ENCODE measurements at regions of chr7 and their contacts with region 1.

Region 1: DNA sequence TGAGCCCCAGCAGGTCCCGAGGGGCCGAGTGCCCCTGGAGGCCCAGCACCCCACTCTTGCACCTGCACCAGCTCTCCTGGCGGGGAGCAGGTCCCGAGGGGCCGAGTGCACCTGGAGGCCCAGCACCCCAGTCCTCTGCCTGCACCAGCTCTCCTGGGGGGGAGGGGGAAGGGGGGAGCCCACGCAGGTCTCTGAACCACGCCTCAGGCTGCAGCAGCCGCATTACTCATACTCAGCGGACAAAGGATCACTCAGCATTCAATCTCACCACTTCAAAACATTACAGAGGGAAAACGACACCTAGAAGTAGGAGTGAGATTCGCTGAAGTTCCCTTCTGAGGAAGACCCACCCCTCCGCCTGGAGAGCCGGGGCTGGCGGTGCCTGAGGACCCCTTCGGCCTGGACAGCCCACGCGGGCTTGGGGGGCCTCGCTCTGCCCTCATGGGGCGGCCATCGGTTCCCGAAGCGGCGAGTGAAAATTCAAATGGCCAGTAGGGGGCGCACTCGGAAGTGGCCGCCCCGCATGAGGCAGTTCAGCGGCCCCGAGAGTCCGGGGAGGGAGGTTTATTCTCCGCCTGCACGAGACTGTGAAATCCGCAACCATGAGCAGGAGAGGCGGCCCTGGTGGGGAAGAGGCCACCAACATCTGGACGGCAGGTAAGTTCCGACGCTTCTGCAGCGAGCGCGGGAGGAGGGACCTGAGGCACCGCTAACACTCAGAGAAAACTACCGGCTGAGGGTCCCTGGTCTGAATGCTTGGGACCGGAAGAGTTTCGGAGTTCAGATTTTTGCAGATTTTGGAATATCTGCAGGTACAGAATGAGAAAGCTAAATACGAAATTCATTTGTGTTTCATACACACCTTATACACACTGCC is 1.1 kb upstream of the GPER1 start:
- DNase-seq: peak; percentile 73
- H3K4me3 ChIP-seq: peak overlapping the region; percentile 7 to 46 (median 36)
- H3K27ac ChIP-seq: peak overlapping the region; percentile 54
- H3K4me1 ChIP-seq: peaks cover 21% of the 10 kb centered on the region
- H3K27me3 ChIP-seq: no peaks in the 10 kb centered on the region
- CTCF ChIP-seq: peak; percentile 85 to 90
- POLR2A ChIP-seq: no peak

Region 2: DNA sequence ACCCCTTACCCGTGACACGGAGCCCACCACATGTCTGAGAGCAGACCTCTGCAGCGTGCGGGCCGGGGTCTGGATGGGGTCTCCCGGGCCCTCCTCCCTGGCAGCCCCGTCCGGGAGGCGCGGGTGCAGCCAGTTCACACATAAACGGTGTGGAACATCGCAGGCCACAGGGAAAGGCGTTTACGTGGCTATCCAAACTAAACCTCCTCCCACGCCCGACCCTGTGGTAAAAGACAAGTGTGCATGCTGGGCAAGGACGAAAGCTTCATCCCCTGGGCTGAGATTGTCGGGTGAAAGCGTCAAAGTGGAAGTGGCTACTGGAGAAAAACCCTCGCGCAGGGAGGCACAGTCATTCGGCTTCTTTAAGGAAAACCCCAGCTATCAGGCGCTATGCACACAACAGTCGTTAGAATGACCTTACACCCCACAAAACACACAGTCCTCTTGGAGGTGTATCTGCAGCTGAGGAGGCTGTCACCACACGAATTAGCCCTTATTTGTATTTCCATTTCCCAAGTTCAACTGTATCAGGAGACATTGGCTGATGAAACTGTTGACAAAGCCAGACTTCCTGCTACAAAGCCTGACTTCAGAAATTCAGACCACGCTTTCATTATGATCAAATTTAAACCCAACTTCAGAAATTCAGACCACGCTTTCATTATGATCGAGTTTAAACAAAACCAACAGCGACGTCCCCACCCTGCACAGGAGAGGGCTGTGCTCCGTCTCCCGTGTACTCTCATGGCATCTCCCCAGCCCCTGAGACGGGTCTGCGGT is 16.4 kb after region 1 on chr7:
- CTCF ChIA-PET with region 1: interaction called, 13 read pairs
- POLR2A ChIA-PET with region 1: no interaction called
- dilution Hi-C with region 1: no loop called
- intact Hi-C with region 1: no loop called
- DNase-seq: no peak
- H3K4me3 ChIP-seq: no peak overlapping the region
- H3K27ac ChIP-seq: no peak overlapping the region
- H3K4me1 ChIP-seq: peaks cover 19% of the 10 kb centered on the region
- H3K27me3 ChIP-seq: no peaks in the 10 kb centered on the region
- CTCF ChIP-seq: no peak
- POLR2A ChIP-seq: no peak

Region 3: DNA sequence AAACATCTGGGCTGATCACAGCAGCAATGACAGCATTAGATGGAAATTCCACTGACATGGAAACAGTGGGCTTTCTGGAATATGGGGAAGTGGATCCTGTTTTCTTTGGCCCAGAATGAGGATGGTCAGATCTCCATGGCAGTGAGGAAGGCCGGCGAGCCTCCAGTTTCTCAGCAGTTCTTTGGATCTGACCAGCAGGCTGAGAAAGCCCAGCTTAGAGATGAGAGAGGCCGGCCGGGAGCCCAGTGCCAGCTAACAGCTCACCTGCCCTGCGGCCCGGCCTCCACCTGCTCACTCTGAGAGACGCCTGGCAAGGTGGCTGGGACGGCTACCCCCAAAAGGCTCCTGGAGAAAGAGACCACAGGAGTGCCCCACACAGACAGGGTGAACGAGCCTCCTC is 25.3 kb after region 1 on chr7:
- CTCF ChIA-PET with region 1: interaction called, 11 read pairs
- POLR2A ChIA-PET with region 1: no interaction called
- dilution Hi-C with region 1: no loop called
- intact Hi-C with region 1: no loop called
- DNase-seq: peak; percentile 74
- H3K4me3 ChIP-seq: no peak overlapping the region
- H3K27ac ChIP-seq: no peak overlapping the region
- H3K4me1 ChIP-seq: peaks cover 7% of the 10 kb centered on the region
- H3K27me3 ChIP-seq: no peaks in the 10 kb centered on the region
- CTCF ChIP-seq: no peak
- POLR2A ChIP-seq: no peak

Region 4: DNA sequence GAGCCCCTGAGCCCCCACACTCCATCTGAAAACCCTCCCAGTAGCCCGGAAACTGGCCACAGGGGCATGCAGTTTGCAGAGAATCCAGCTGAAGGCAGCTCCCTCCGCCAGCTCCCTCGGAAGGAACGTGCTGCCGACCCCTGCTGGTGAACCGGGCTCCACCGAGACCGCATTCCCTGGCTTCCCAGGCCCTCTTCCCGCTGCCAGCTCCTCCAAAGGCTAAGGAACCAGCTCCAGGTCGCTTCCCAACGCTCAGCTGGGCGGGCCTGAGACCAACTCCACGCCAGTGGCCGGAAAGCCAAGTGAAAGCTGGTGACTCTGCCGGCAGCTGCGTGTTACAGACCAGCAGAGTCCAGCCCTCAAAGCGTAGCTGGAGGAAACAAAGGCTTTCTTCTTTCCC is 36.9 kb after region 1 on chr7:
- CTCF ChIA-PET with region 1: interaction called, 65 read pairs
- POLR2A ChIA-PET with region 1: no interaction called
- dilution Hi-C with region 1: no loop called
- intact Hi-C with region 1: loop called (anchors 2 kb)
- DNase-seq: peak; percentile 94
- H3K4me3 ChIP-seq: no peak overlapping the region
- H3K27ac ChIP-seq: peak overlapping the region; percentile 75
- H3K4me1 ChIP-seq: peaks cover 12% of the 10 kb centered on the region
- H3K27me3 ChIP-seq: no peaks in the 10 kb centered on the region
- CTCF ChIP-seq: peak; percentile 78 to 93
- POLR2A ChIP-seq: peak; percentile 38

Region 5: GRCh38 chr7:1137510-1138167 is 50.8 kb after region 1 on chr7:
- CTCF ChIA-PET with region 1: interaction called, 22 read pairs
- POLR2A ChIA-PET with region 1: interaction called, 3 read pairs
- dilution Hi-C with region 1: no loop called
- intact Hi-C with region 1: loop called (anchors 1 kb)
- DNase-seq: no peak
- H3K4me3 ChIP-seq: peak overlapping the region; percentile 72 to 97 (median 80)
- H3K27ac ChIP-seq: peak overlapping the region; percentile 33
- H3K4me1 ChIP-seq: peaks cover 10% of the 10 kb centered on the region
- H3K27me3 ChIP-seq: no peaks in the 10 kb centered on the region
- CTCF ChIP-seq: no peak
- POLR2A ChIP-seq: peak; percentile 64

Region 6: GRCh38 chr7:1159891-1160668 is 73.3 kb after region 1 on chr7 and contains the start of gene ZFAND2A:
- CTCF ChIA-PET with region 1: no interaction called
- POLR2A ChIA-PET with region 1: interaction called, 4 read pairs
- dilution Hi-C with region 1: no loop called
- intact Hi-C with region 1: loop called (anchors 5 kb)
- DNase-seq: peak; percentile 99
- H3K4me3 ChIP-seq: peak within 1 kb of the TSS; percentile 71 to 97 (median 77)
- H3K27ac ChIP-seq: peak within 1 kb of the TSS; percentile 79
- H3K4me1 ChIP-seq: peaks cover 30% of the 10 kb centered on the region
- H3K27me3 ChIP-seq: no peaks in the 10 kb centered on the region
- CTCF ChIP-seq: no peak
- POLR2A ChIP-seq: peak; percentile 90
- total RNA-seq, gene ZFAND2A: 20.6 and 31.8 TPM in 2 replicates

Region 7: GRCh38 chr7:1175967-1176851 is 89.4 kb after region 1 on chr7:
- CTCF ChIA-PET with region 1: interaction called, 10 read pairs
- POLR2A ChIA-PET with region 1: no interaction called
- dilution Hi-C with region 1: no loop called
- intact Hi-C with region 1: loop called (anchors 2 kb)
- DNase-seq: peak; percentile 80
- H3K4me3 ChIP-seq: peak overlapping the region in 2 of 3 experiments; percentile 17 to 22
- H3K27ac ChIP-seq: peak overlapping the region; percentile 20
- H3K4me1 ChIP-seq: peaks cover 14% of the 10 kb centered on the region
- H3K27me3 ChIP-seq: no peaks in the 10 kb centered on the region
- CTCF ChIP-seq: peak; percentile 97 to 98
- POLR2A ChIP-seq: no peak